SK-MEL-5 (cell line): ENCODE measurements at regions of chr22 and their contacts with region 1.

Region 1: DNA sequence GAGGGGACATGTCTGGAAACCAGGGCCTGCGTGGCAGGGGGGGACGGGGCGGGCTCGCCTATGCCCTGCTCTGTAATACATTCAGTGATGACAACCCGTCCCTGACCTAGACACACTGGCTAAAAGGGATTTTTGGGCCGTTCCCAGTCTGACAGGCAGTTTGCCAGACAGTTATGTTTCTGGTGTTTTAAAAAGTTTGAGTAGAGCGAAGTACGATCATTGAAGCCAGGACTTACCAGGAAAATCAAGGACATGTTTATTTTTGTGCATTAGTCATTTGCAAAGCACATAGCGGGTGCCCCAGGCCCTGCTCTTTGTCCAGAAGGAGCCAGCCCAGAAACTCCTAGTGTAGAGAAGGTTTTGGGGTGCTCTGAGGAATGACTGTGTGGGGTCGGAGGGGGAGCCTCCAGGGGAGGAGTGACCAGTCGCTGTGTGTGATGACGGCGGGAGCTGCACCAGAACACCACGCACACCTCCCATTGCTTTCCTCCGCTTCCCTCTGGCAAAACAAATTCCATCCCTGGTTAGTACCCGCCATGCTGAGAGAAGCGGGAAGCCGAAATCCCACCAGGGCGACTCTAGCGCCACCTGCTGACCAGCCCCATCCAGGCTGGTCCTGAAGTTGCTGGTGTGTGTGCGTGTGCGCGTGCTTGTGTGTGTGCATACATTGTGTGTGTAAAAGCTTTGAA is 50.8 kb downstream of the FBLN1 start:
- DNase-seq: peak; percentile 83

Region 2: GRCh38 chr22:45271667-45272201 is 281.8 kb before region 1 on chr22:
- in situ Hi-C with region 1: loop called (anchors 10 kb)
- DNase-seq: peak; percentile 71

Region 3: GRCh38 chr22:45296628-45297297 is 256.7 kb before region 1 on chr22:
- in situ Hi-C with region 1: no loop called
- DNase-seq: no peak